GM12878 (cell line): ENCODE measurements at regions of chr3 and their contacts with region 1.

Region 1: GRCh38 chr3:108406661-108407206 is 103.7 kb downstream of the MYH15 start:
- DNase-seq: peak; percentile 68
- ATAC-seq: peak; percentile 99
- H3K4me3 ChIP-seq: no peak overlapping the region
- H3K27ac ChIP-seq: no peak overlapping the region
- H3K4me1 ChIP-seq: peaks cover 4% of the 10 kb centered on the region; the same call in 1 of the 2 replicates
- H3K27me3 ChIP-seq: no peaks in the 10 kb centered on the region
- CTCF ChIP-seq: peak; percentile 67 to 89 (median 86)
- EP300 ChIP-seq: no peak
- POLR2A ChIP-seq: no peak
- RAD21 ChIP-seq: peak; percentile 82

Region 2: GRCh38 chr3:107938143-107938542 is 468.6 kb before region 1 on chr3:
- CTCF ChIA-PET with region 1: interaction called, 15 read pairs
- POLR2A ChIA-PET with region 1: no interaction called
- RAD21 ChIA-PET with region 1: interaction called, 3 read pairs
- SMC1A ChIA-PET with region 1: interaction called, 26 read pairs
- in situ Hi-C with region 1: no loop called
- intact Hi-C with region 1: loop called (anchors 2 kb)
- DNase-seq: no peak
- ATAC-seq: no peak
- H3K4me3 ChIP-seq: no peak overlapping the region
- H3K27ac ChIP-seq: no peak overlapping the region
- H3K4me1 ChIP-seq: no peaks in the 10 kb centered on the region
- H3K27me3 ChIP-seq: no peaks in the 10 kb centered on the region; a peak in 1 of 4 replicates
- CTCF ChIP-seq: peak; percentile 19 to 47 (median 25); a peak in 4 of 6 replicates
- EP300 ChIP-seq: no peak
- POLR2A ChIP-seq: no peak
- RAD21 ChIP-seq: peak; percentile 62

Region 3: DNA sequence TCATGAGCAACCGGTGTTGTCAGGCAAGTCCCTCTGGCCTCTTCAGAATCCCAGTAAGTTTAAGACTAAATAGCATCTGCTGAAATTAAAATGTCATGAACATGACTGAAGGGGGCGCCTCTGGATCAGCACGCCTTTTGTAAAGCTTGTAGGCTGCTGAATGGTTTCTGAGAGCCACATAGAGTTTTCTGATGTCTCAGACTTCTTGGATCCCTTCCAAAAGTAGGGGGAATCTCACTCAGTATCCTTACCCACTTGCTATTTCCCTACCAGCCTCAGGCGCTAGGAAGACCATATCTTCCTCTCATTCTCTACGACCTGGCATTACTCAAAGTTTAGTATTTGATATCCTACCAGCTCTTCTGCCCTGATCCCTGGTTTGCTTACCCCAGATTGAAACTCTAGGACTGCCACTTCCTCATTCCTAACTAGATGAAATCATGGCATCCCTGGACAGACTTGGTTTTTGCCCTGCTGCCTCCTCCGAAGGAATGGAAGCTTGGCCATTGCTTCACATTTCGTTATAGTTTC is 253.2 kb before region 1 on chr3:
- CTCF ChIA-PET with region 1: interaction called, 83 read pairs
- POLR2A ChIA-PET with region 1: no interaction called
- RAD21 ChIA-PET with region 1: interaction called, 45 read pairs
- SMC1A ChIA-PET with region 1: interaction called, 53 read pairs
- in situ Hi-C with region 1: loop called (anchors 5 kb)
- intact Hi-C with region 1: loop called (anchors 1 kb)
- DNase-seq: no peak
- ATAC-seq: peak; percentile 91
- H3K4me3 ChIP-seq: no peak overlapping the region
- H3K27ac ChIP-seq: no peak overlapping the region
- H3K4me1 ChIP-seq: no peaks in the 10 kb centered on the region
- H3K27me3 ChIP-seq: no peaks in the 10 kb centered on the region
- CTCF ChIP-seq: peak; percentile 45 to 68 (median 59); a peak in 5 of 6 replicates
- EP300 ChIP-seq: no peak
- POLR2A ChIP-seq: no peak
- RAD21 ChIP-seq: peak; percentile 92

Region 4: DNA sequence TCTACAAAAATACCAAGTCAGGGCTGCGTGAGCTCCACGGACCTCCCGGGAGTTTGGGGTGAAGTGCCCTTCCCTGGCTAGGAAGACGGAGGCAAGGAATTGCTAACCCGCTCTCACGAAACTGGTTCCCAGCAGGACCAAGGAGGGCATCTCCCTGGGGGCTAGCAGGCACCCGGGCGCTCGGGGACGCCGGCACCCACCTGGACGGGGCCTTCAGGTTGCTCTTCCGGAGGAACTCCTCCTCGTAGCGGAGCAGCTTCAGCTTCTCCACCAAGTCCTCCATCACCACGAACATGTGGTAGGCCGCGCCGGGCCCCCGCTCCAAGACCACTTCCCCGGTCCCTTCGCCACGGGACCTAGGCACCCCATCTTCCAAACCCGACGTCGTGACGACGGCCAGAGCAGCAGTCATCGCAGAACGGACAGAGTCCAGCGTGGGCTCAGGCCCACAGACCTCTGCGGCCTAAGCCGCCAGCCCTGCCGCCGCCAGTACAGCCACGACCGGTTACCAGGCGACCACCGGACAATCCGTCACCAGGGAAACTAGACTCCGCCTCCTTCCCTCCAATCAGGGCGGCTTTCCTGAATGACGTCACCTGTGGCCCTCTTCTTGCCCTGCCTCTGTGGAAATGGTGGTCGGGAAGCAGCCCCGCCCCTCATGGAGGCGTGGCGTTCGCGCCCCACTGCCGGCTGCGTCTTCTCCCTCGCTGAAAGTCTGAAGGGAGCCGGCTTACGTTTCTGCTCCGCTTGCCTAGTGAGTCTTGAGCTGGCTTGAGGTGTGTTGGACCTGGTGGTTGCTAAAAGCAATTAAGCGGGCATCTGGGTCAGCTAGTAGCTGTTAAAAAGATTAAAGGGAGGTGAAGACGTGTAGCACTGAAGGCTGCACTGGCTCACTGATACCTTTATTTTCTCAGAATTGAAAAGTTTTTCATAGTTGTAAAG is 184.6 kb before region 1 on chr3 and contains the start of gene IFT57:
- CTCF ChIA-PET with region 1: no interaction called
- POLR2A ChIA-PET with region 1: no interaction called
- RAD21 ChIA-PET with region 1: interaction called, 6 read pairs
- SMC1A ChIA-PET with region 1: interaction called, 16 read pairs
- in situ Hi-C with region 1: no loop called
- intact Hi-C with region 1: loop called (anchors 5 kb)
- DNase-seq: peak; percentile 92
- ATAC-seq: peak; percentile 94
- H3K4me3 ChIP-seq: peak within 1 kb of the TSS; percentile 67
- H3K27ac ChIP-seq: peak within 1 kb of the TSS; percentile 65
- H3K4me1 ChIP-seq: peaks cover 9% of the 10 kb centered on the region; the same call in 1 of the 2 replicates
- H3K27me3 ChIP-seq: no peaks in the 10 kb centered on the region
- CTCF ChIP-seq: no peak
- EP300 ChIP-seq: 0 out of 4 replicates have a peak, but pooled peaks of 1 of the 2 experiments have one; percentile 10
- POLR2A ChIP-seq: peak; percentile 75
- RAD21 ChIP-seq: peak; percentile 11; the same call in 1 of the 2 replicates
- polyA plus RNA-seq, gene IFT57: 1.8 to 2.8 TPM

Region 5: DNA sequence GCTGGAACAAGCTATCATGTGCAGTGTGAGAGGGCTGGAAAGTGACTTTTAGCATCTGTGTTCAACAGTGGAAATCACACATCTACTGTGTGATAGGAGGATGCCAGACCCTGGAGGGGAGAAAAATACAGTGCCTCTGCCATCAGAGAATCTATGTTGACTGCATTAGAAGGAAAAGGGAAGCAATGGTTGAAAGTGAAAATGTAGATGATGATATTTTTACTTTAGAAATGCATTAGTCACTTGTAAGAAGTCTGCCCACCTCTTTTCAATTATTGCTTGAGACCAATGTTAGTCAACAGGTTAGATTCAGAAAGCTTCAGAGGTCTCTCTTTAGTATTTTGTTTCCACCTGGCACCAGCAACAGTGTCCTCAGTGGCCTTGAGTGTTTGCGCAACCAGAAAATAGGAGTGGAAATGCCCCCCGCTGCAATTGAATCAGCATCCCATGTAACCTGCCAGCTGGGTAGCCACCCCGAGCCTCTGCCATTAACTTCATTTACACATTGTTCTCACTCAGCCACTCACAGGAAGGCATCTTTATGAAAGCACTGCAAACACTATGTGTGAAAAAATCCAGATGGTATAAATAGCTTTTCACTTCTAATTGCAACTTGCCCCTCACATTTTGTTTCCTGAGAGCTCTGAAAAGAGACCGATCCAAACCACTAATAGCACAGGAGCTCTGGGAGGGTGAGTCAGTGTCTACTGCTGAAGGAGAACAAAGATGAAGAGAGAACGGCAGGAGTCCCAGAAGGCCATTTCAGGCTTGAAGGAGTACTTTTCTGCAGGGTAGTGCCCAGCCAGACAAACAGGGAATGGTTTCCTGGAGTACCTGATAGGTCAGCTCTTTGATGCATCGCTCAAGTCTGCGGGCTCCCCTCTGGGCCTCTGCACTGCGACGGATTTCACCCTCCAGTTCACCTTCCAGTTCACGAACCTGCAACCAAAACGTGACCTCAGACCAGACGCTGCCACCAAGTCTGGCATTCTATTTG is 18.3 kb before region 1 on chr3:
- CTCF ChIA-PET with region 1: interaction called, 10 read pairs
- POLR2A ChIA-PET with region 1: no interaction called
- RAD21 ChIA-PET with region 1: interaction called, 10 read pairs
- SMC1A ChIA-PET with region 1: interaction called, 59 read pairs
- in situ Hi-C with region 1: no loop called
- intact Hi-C with region 1: no loop called
- DNase-seq: peak; percentile 70
- ATAC-seq: peak; percentile 84
- H3K4me3 ChIP-seq: peak overlapping the region; percentile 42
- H3K27ac ChIP-seq: peak overlapping the region; percentile 33; the same call in 1 of the 2 replicates
- H3K4me1 ChIP-seq: peaks cover 33% of the 10 kb centered on the region
- H3K27me3 ChIP-seq: no peaks in the 10 kb centered on the region
- CTCF ChIP-seq: no peak
- EP300 ChIP-seq: peak; percentile 38 to 48; a peak in 1 of 4 replicates
- POLR2A ChIP-seq: no peak
- RAD21 ChIP-seq: no peak

Region 6: GRCh38 chr3:108552267-108553159 is 145.8 kb after region 1 on chr3:
- CTCF ChIA-PET with region 1: interaction called, 4 read pairs
- POLR2A ChIA-PET with region 1: no interaction called
- RAD21 ChIA-PET with region 1: interaction called, 3 read pairs
- SMC1A ChIA-PET with region 1: interaction called, 10 read pairs
- in situ Hi-C with region 1: no loop called
- intact Hi-C with region 1: no loop called
- DNase-seq: no peak
- ATAC-seq: peak; percentile 71
- H3K4me3 ChIP-seq: no peak overlapping the region
- H3K27ac ChIP-seq: no peak overlapping the region
- H3K4me1 ChIP-seq: no peaks in the 10 kb centered on the region
- H3K27me3 ChIP-seq: no peaks in the 10 kb centered on the region
- CTCF ChIP-seq: peak; percentile 28 to 57 (median 30); a peak in 4 of 6 replicates
- EP300 ChIP-seq: no peak
- POLR2A ChIP-seq: no peak
- RAD21 ChIP-seq: peak; percentile 63